ENCODE measurements at regions of chr18 and their contacts with region 1.

Region 1: GRCh38 chr18:3062798-3063680 is 50.1 kb upstream of the LPIN2 start:
- DNase-seq: peak; percentile 85
- ATAC-seq: peak; percentile 74

Region 2: GRCh38 chr18:2948038-2948437 is 115.0 kb before region 1 on chr18:
- intact Hi-C with region 1: loop called (anchors 5 kb)
- DNase-seq: no peak
- ATAC-seq: peak; percentile 95

Measured in Right ventricle myocardium superior (tissue), 1 donor.